ENCODE measurements at regions of chr4 and their contacts with region 1.

Region 1: GRCh38 chr4:123832173-123833026 is 435.8 kb downstream of the SPRY1 start:
- DNase-seq: peak in 1 of 2 donors; percentile 84
- ATAC-seq: peak; percentile 88 to 96 (median 93)
- H3K4me3 ChIP-seq: no peak overlapping the region
- H3K27ac ChIP-seq: peak overlapping the region; percentile 71 to 94 (median 90)
- H3K4me1 ChIP-seq: peaks cover 8 to 62% (median 38%) of the 10 kb centered on the region in 9 donors
- H3K27me3 ChIP-seq: no peaks in the 10 kb centered on the region
- CTCF ChIP-seq: no peak

Region 2: DNA sequence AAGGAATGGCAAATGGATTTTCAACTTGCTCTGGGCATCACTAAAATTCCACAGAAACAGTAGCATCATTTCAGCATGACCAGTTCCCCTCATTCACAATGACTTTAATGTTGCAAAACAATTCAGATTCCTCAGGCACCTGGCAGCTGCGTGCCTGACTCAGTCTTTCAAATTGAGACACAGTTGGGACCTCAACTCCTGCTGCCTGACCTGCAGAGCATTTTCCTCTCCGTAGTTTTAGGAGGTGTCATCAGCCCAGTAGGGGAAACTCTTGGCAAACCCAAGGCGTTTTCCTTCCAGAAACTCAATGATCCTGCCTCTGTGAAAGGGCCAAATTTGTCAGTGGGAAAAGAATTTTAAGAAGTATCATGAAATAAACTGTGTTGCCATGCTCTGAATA is 46.9 kb before region 1 on chr4:
- intact Hi-C with region 1: loop called in 2 of 10 experiments (anchors 5 kb)
- DNase-seq: peak; percentile 24 to 40
- ATAC-seq: peak; percentile 68 to 92 (median 72)
- H3K4me3 ChIP-seq: no peak overlapping the region
- H3K27ac ChIP-seq: peak overlapping the region in 9 of 10 donors; percentile 28 to 86 (median 72)
- H3K4me1 ChIP-seq: peaks cover 0 to 47% (median 31%) of the 10 kb centered on the region in 9 donors
- H3K27me3 ChIP-seq: no peaks in the 10 kb centered on the region
- CTCF ChIP-seq: no peak

Region 3: DNA sequence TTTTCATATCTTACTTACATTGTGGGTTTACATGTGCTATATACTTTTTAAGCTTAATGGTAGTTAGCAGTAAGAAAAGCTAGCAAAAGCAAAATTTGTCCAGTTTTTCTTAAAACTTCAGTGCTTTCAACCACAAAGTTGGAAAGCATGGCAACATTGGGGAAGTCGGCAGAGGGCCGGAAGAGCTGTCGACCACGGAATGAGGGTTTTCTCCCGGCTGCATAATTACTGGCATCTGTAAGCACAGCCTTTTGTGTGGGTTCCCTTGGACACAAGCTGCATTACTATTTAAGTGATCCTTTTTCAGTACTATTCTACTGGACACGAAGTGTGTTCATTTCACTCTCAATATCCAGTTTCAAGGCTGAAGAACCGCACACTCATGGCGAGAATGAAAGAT is 319.7 kb after region 1 on chr4:
- intact Hi-C with region 1: no loop called
- DNase-seq: no peak
- ATAC-seq: no peak
- H3K4me3 ChIP-seq: no peak overlapping the region
- H3K27ac ChIP-seq: no peak overlapping the region
- H3K4me1 ChIP-seq: no peaks in the 10 kb centered on the region
- H3K27me3 ChIP-seq: no peaks in the 10 kb centered on the region
- CTCF ChIP-seq: no peak